HEK293 (cell line): ENCODE measurements at regions of chr11 and their contacts with region 1.

Region 1: GRCh38 chr11:83819933-83820549 is 533.9 kb upstream of the CCDC90B start:
- H3K4me3 ChIP-seq: no peak overlapping the region
- H3K27ac ChIP-seq: no peak overlapping the region
- H3K4me1 ChIP-seq: no peaks in the 10 kb centered on the region
- CTCF ChIP-seq: peak; percentile 25; the same call in 1 of the 2 replicates

Region 2: DNA sequence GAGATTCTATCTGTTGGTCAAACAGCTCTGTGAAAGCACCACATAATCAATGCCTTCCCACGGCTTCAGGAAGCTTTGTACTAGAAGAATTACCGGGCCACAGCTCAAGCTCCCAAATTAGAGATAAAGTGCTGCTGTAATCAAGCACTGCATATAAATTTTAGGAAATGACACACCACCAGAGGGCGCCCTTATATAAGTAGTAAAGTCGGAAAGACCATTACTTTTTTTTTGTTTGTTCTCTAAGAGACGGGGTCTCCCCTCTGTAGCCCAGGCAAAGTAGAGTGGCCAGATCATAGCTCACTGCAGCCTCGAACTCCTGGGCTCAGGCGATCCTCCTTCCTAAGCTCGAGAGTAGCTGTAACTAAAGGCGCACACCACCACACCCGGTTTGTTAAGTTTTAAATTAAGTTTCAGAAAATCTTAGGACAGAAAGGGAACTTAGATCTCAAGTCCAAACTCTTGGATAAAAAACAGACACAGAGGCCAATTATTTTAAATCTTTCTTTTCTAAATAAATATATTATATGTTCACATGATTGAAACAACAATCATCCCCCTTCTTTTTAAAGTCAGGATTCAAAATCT is 952.5 kb before region 1 on chr11:
- CTCF ChIA-PET with region 1: interaction called, 10 read pairs
- POLR2A ChIA-PET with region 1: no interaction called
- H3K4me3 ChIP-seq: no peak overlapping the region
- H3K27ac ChIP-seq: no peak overlapping the region
- H3K4me1 ChIP-seq: no peaks in the 10 kb centered on the region; the same call in 1 of the 2 replicates
- CTCF ChIP-seq: no peak

Region 3: DNA sequence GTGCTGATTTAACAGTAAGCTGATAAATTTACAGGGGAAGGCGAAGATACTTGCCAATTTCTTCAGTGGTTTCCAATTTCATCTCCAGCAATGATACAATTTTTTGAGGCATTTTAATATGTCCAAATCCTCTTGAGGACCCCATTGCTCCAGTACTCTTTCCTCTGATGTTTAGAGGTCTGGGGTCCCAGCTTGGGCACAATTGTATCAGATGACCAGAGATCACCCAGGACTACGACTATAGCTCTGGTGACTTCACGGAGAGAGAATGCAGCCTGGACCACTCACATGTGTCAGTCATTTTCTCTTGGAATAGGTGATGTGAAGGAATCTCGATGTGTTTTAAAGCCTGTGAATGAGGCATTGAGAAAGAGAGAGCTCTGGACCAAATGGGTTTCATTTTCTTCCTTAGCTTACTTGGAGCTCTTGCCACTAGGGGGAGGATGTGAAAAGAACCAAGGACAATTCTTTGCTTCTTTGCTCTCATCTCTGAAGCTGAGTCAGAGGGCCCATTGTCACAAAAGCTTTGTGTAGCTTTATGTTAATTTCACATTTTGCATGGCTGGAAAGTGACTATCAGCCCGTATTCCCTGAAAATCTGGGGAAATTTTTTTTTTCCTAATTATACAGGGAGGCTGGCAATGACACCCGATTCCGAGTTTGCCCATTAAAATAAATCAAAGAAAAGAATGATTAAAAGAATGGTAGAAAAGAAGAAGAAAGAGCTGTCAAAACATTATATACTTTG is 527.2 kb before region 1 on chr11:
- CTCF ChIA-PET with region 1: interaction called, 22 read pairs
- POLR2A ChIA-PET with region 1: no interaction called
- H3K4me3 ChIP-seq: no peak overlapping the region
- H3K27ac ChIP-seq: no peak overlapping the region
- H3K4me1 ChIP-seq: no peaks in the 10 kb centered on the region
- CTCF ChIP-seq: no peak

Region 4: GRCh38 chr11:83801780-83802179 is 18.3 kb before region 1 on chr11:
- CTCF ChIA-PET with region 1: interaction called, 17 read pairs
- POLR2A ChIA-PET with region 1: no interaction called
- H3K4me3 ChIP-seq: no peak overlapping the region
- H3K27ac ChIP-seq: no peak overlapping the region
- H3K4me1 ChIP-seq: no peaks in the 10 kb centered on the region
- CTCF ChIP-seq: no peak